ENCODE measurements at regions of chr13 and their contacts with region 1.

Region 1: DNA sequence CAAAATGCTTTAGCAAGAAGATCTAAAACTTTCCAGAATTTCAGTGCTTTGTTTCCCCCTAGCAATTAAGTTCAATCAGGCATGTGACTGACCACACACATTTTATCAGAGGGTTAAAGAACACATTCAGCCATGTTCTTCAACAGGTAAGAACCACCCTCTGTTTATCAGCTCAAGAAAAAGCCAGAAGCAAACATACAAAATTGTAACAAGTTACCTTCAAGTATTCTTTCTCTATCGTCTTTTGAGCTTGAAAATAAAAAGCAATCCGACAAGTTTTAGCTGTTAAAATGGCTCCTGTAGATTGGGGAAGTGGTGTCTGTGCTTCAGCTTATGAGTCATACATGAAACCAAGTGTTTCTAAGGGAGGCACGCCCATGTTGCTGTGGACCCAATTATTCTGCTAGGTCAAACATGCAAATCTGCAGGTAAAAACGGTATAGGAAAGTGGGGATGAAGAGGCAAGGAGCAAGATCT is at the start of gene ELF1:
- DNase-seq: peak; percentile 71
- H3K4me3 Mint-ChIP-seq: peak within 1 kb of the TSS; percentile 88
- H3K27ac Mint-ChIP-seq: peak within 1 kb of the TSS; percentile 98
- H3K4me1 Mint-ChIP-seq: peaks cover 41% of the 10 kb centered on the region
- H3K27me3 Mint-ChIP-seq: no peaks in the 10 kb centered on the region
- total RNA-seq, gene ELF1: 159 to 169 TPM

Region 2: GRCh38 chr13:40974460-40975407 is 44.3 kb before region 1 on chr13:
- CTCF ChIA-PET with region 1: interaction called, 41 read pairs
- POLR2A ChIA-PET with region 1: interaction called, 445 read pairs
- DNase-seq: peak; percentile 36
- H3K4me3 Mint-ChIP-seq: peak overlapping the region; percentile 19
- H3K27ac Mint-ChIP-seq: peak overlapping the region; percentile 47
- H3K4me1 Mint-ChIP-seq: peaks cover 84% of the 10 kb centered on the region
- H3K27me3 Mint-ChIP-seq: no peaks in the 10 kb centered on the region

Region 3: GRCh38 chr13:40992678-40993518 is 26.2 kb before region 1 on chr13:
- CTCF ChIA-PET with region 1: interaction called, 3 read pairs
- POLR2A ChIA-PET with region 1: interaction called, 128 read pairs
- DNase-seq: no peak
- H3K4me3 Mint-ChIP-seq: no peak overlapping the region
- H3K27ac Mint-ChIP-seq: peak overlapping the region; percentile 61
- H3K4me1 Mint-ChIP-seq: peaks cover 79% of the 10 kb centered on the region
- H3K27me3 Mint-ChIP-seq: no peaks in the 10 kb centered on the region

Region 4: GRCh38 chr13:41029629-41030028 is 10.6 kb after region 1 on chr13:
- CTCF ChIA-PET with region 1: interaction called, 3 read pairs
- POLR2A ChIA-PET with region 1: interaction called, 19 read pairs
- DNase-seq: peak; percentile 37
- H3K4me3 Mint-ChIP-seq: no peak overlapping the region
- H3K27ac Mint-ChIP-seq: no peak overlapping the region
- H3K4me1 Mint-ChIP-seq: peaks cover 31% of the 10 kb centered on the region
- H3K27me3 Mint-ChIP-seq: no peaks in the 10 kb centered on the region

Region 5: DNA sequence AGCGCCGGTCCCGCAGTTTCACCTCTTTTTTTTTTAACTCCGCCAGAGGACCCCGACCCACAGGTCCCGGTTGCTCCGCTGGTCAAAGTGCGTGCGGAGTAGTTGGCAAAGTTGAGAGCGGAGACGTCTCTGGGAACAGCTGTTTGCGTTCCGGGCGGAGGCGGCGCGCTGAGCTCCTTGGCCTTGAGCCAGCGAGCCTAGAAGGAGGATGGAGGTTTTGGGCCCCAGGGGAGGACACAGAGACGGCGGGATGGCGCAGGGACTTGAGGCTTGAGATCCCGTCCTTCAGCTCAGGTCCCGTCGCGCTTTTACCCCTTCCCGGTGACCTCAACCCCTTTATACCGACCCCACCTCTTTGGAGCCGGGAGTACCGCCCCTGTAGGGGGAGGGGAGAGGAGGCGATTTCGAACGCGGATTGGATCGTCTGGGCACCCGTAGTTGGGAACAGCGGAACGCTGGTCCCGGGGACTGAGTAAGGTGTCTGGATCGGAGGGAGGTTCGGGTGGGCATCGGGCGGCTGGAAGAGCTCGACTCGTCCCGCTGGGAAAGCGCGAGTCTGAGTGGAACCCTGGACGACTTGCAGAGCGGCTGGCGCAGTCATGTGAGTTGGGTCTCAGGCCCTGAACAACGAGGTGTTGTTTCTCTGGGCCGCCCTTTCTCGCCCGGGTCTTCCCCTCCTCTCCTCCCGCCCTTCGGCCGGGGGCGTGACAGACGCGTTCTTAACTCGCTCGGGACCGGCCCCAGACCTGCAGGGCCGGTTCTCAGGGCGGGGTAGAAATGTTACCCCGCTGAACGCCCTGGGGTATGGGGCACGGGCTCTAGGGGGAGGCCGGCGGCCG is 42.2 kb after region 1 on chr13 and contains the start of gene WBP4:
- CTCF ChIA-PET with region 1: interaction called, 33 read pairs
- POLR2A ChIA-PET with region 1: interaction called, 147 read pairs
- DNase-seq: peak; percentile 89
- H3K4me3 Mint-ChIP-seq: peak within 1 kb of the TSS; percentile 95
- H3K27ac Mint-ChIP-seq: peak within 1 kb of the TSS; percentile 91
- H3K4me1 Mint-ChIP-seq: peaks cover 48% of the 10 kb centered on the region
- H3K27me3 Mint-ChIP-seq: no peaks in the 10 kb centered on the region
- total RNA-seq, gene WBP4: 9.0 to 9.3 TPM